Psoas muscle (tissue), 8 donors: ENCODE measurements at regions of chr9 and their contacts with region 1.

Region 1: GRCh38 chr9:71716138-71716909 is 52.0 kb downstream of the CEMIP2 start:
- DNase-seq: no peak
- ATAC-seq: no peak
- H3K4me3 ChIP-seq: no peak overlapping the region
- H3K27ac ChIP-seq: no peak overlapping the region
- H3K4me1 ChIP-seq: no peaks in the 10 kb centered on the region
- H3K27me3 ChIP-seq: no peaks in the 10 kb centered on the region
- CTCF ChIP-seq: peak; percentile 39

Region 2: GRCh38 chr9:71762900-71763653 is 46.8 kb after region 1 on chr9:
- intact Hi-C with region 1: loop called in 1 of 2 experiments (anchors 5 kb)
- DNase-seq: no peak
- ATAC-seq: no peak
- H3K4me3 ChIP-seq: no peak overlapping the region
- H3K27ac ChIP-seq: no peak overlapping the region
- H3K4me1 ChIP-seq: peaks cover 56% of the 10 kb centered on the region
- H3K27me3 ChIP-seq: no peaks in the 10 kb centered on the region
- CTCF ChIP-seq: no peak